ENCODE measurements at regions of chr6 and their contacts with region 1.

Region 1: DNA sequence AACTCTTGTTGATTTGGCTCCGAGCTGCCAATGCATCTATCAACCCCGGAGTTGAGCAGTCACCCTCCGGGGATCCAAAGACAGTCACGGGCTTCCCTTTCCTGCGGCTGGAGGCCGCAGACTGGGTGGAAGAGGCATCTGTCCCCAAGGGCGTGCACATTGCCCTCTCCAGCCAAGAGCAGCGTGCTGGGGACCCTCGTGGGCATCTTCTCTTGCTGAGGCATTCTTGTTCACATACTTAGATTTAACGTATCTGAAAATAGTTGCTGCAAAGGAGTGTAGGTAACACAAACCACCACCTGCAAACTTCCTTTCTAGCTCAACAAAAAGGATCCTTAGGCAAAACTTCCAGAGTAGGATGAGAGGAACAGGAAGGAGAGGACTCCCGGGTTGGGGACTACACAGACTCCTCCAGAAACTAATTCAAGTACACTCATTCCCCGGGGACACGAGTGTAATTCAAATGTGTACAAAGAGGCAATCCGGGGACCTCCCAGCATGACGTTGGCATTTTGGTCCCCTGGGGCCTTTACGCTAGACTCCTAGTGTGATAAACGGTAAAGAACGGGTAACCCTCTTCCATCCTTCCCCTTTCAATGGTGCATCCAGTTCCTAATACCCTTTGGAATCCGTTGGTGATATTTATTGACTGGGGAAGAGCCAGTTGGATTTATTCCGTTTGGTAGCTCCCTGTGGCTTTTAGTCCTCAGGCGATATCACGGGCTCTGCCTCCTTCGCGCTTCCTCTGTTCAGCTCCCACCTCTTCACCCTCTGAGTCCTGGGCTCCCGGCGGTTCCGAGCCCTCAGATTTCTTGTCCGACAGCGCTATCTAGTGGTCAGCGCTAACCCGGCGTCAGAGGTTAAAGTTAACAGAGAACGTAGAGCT is 2.7 kb upstream of the COL12A1 start:
- DNase-seq: peak; percentile 80
- H3K4me3 ChIP-seq: no peak overlapping the region
- H3K27ac ChIP-seq: no peak overlapping the region
- H3K4me1 ChIP-seq: peaks cover 31% of the 10 kb centered on the region
- H3K27me3 ChIP-seq: peaks cover 17% of the 10 kb centered on the region in 2 experiments
- CTCF ChIP-seq: peak; percentile 78 to 92
- POLR2A ChIP-seq: no peak

Region 2: GRCh38 chr6:73732845-73733675 is 1475.5 kb before region 1 on chr6:
- CTCF ChIA-PET with region 1: interaction called, 200 read pairs
- POLR2A ChIA-PET with region 1: no interaction called
- dilution Hi-C with region 1: no loop called
- intact Hi-C with region 1: no loop called
- DNase-seq: peak; percentile 78
- H3K4me3 ChIP-seq: no peak overlapping the region
- H3K27ac ChIP-seq: no peak overlapping the region
- H3K4me1 ChIP-seq: no peaks in the 10 kb centered on the region
- H3K27me3 ChIP-seq: no peaks in the 10 kb centered on the region
- CTCF ChIP-seq: peak; percentile 91 to 93
- POLR2A ChIP-seq: no peak

Region 3: GRCh38 chr6:73969971-73970970 is 1238.3 kb before region 1 on chr6:
- CTCF ChIA-PET with region 1: interaction called, 113 read pairs
- POLR2A ChIA-PET with region 1: no interaction called
- dilution Hi-C with region 1: no loop called
- intact Hi-C with region 1: loop called (anchors 1 kb)
- DNase-seq: peak; percentile 56
- H3K4me3 ChIP-seq: no peak overlapping the region
- H3K27ac ChIP-seq: no peak overlapping the region
- H3K4me1 ChIP-seq: peaks cover 8% of the 10 kb centered on the region
- H3K27me3 ChIP-seq: peaks cover 3 to 4% of the 10 kb centered on the region in 2 experiments
- CTCF ChIP-seq: peak; percentile 48 to 53
- POLR2A ChIP-seq: no peak

Region 4: DNA sequence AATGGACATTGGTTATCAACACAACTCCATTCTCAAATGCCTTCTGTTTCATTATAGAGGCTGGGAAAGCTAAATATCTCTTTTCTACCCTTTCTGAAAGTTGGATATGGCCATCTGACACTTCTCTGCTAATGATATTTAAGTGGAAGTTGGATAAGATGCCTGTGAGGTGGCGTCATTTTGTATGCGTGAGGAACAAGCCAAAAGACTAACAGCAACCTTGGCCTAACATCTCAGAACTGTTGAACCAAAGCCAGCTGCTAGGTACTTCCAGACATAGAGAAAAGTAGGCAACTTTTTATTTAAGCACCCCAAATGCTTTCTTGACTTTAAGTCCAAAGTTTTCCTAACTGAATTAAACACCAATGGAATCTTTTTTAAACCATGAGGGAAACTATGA is 804.2 kb before region 1 on chr6:
- CTCF ChIA-PET with region 1: interaction called, 393 read pairs
- POLR2A ChIA-PET with region 1: no interaction called
- dilution Hi-C with region 1: no loop called
- intact Hi-C with region 1: loop called (anchors 1 kb)
- DNase-seq: no peak
- H3K4me3 ChIP-seq: no peak overlapping the region
- H3K27ac ChIP-seq: no peak overlapping the region
- H3K4me1 ChIP-seq: no peaks in the 10 kb centered on the region
- H3K27me3 ChIP-seq: no peaks in the 10 kb centered on the region
- CTCF ChIP-seq: no peak
- POLR2A ChIP-seq: no peak

Region 5: DNA sequence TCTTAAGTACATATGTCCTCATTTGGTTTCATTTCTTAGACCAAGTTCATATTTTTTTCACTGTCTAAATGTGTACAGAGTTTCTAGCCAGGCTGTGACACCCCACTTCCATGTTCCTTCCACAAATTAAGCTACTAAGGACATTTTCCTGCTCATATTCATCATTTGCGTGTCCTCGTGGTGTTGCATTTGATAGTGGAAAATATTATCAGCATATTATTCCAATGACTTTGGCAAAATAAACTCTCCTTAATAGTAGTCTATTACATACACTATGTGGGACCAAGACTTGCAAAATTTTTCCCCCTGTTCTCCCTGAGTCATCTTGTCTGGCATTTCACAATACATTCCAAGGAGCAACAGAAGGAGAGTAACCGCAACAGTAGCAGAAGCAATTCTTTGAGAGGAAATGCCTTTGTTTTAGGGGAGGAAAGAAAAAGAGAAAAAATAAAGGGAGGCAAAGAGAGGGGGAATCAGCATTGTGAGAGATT is 601.9 kb before region 1 on chr6:
- CTCF ChIA-PET with region 1: interaction called, 13 read pairs
- POLR2A ChIA-PET with region 1: no interaction called
- dilution Hi-C with region 1: no loop called
- intact Hi-C with region 1: loop called (anchors 2 kb)
- DNase-seq: peak; percentile 86
- H3K4me3 ChIP-seq: no peak overlapping the region
- H3K27ac ChIP-seq: peak overlapping the region; percentile 86
- H3K4me1 ChIP-seq: peaks cover 38% of the 10 kb centered on the region
- H3K27me3 ChIP-seq: no peaks in the 10 kb centered on the region
- CTCF ChIP-seq: no peak
- POLR2A ChIP-seq: no peak

Region 6: DNA sequence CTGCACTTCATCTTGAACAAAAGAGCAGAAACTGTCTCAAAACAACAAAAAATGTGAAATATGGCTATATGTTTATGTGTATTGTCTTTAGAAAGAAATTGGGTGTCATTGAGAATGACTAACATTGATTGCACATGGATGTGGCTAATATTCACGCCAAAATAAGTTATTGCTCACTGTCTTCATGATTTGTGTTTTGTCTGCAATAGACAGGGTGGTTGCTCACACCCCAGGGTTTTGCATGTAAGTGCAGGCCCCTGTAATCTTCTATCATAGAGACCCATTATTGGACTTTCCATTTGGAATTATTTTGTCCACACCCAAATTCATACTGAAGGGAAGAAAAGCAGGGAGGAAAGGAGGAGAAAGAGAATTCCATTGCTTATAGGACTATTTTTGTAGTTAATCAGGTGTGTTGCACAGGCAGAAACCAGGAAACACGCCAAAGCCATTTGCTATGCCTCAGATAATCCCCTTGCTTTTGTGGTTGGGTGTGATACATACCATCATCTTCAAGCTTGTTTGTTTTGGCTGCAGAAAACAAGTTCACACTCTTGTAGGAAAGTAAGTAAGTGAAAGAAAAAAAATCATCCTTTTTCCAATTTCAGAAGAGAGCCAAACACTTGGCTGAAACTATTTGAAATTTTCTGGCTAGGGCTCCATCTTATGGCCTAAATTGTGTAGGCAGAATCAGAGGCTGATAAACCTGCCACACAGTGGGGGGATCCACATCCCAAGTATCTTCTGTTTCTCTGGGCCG is 216.8 kb before region 1 on chr6:
- CTCF ChIA-PET with region 1: interaction called, 10 read pairs
- POLR2A ChIA-PET with region 1: no interaction called
- dilution Hi-C with region 1: no loop called
- intact Hi-C with region 1: no loop called
- DNase-seq: peak; percentile 20
- H3K4me3 ChIP-seq: no peak overlapping the region
- H3K27ac ChIP-seq: no peak overlapping the region
- H3K4me1 ChIP-seq: no peaks in the 10 kb centered on the region
- H3K27me3 ChIP-seq: no peaks in the 10 kb centered on the region
- CTCF ChIP-seq: no peak
- POLR2A ChIP-seq: no peak

Region 7: GRCh38 chr6:75230484-75231325 is 22.2 kb after region 1 on chr6:
- CTCF ChIA-PET with region 1: interaction called, 11 read pairs
- POLR2A ChIA-PET with region 1: no interaction called
- dilution Hi-C with region 1: no loop called
- intact Hi-C with region 1: loop called (anchors 1 kb)
- DNase-seq: peak; percentile 70
- H3K4me3 ChIP-seq: no peak overlapping the region
- H3K27ac ChIP-seq: no peak overlapping the region
- H3K4me1 ChIP-seq: peaks cover 3% of the 10 kb centered on the region
- H3K27me3 ChIP-seq: no peaks in the 10 kb centered on the region
- CTCF ChIP-seq: peak; percentile 55 to 69
- POLR2A ChIP-seq: no peak